ENCODE measurements at regions of chr11 and their contacts with region 1.

Region 1: GRCh38 chr11:61509043-61510029 is 787 bp downstream of the LRRC10B start:
- DNase-seq: peak; percentile 79 to 80
- H3K4me3 ChIP-seq: peak overlapping the region in 1 of 3 donors; percentile 19
- H3K27ac ChIP-seq: no peak overlapping the region
- H3K4me1 ChIP-seq: peaks cover 13 to 20% of the 10 kb centered on the region in 2 donors
- H3K27me3 ChIP-seq: peaks cover 13% of the 10 kb centered on the region
- CTCF ChIP-seq: peak; percentile 29 to 83 (median 74)
- POLR2A ChIP-seq: no peak

Region 2: DNA sequence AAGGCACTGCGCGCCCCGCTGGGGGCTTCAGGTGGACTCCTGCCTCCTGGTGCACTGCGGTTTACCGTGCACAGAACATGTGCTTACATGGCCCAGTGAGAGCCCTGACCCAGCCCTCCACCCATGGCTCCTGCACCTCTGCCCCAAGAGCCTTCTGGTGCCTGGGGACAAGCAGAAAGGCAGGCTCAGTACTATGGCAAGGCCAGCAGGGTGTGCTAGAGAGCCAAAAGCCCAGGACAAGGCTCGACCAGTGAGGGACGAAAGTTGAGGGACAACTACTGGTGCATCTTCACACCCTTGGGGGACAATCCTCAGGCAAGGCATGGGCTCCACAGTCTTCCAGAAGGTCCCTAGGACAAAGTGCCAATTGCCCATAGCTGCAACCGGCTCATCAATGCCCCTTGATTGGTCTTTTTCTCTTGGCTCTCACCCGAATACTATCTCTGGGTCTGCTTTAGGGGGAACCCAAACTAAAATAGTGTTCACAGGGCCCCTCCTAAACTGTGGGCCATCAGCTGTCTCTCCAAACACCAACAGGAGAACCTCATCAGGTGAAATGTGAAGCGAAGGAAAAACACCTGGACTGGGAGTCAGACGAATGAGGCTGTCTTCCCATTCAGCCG is 254.8 kb before region 1 on chr11:
- intact Hi-C with region 1: no loop called
- DNase-seq: peak; percentile 56 to 61
- H3K4me3 ChIP-seq: no peak overlapping the region
- H3K27ac ChIP-seq: no peak overlapping the region
- H3K4me1 ChIP-seq: peaks cover 16 to 30% of the 10 kb centered on the region in 2 donors
- H3K27me3 ChIP-seq: no peaks in the 10 kb centered on the region
- CTCF ChIP-seq: peak in 5 of 6 experiments; percentile 68 to 89 (median 79)
- POLR2A ChIP-seq: no peak

Region 3: DNA sequence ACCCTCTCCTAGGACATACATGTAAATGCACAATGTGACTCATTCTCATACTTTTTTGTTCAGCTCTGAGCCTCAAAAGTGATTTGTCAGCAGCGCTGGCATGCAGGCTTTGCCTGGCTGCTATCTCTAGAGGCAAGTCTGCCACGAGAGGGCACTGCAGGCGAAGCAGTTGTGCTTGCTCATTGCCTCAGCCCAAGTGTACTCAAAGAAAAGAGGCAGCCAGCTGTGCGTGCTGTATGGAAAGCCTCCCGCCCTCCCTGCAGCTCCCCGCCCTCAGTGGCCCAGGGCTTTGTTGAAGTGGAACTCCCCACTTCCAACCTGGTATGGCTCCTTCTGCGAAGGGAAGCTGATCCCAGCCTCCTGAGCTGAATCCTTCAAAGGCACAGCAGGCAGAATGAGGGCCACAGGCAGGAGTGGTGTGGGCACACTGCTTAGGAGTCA is 63.1 kb before region 1 on chr11:
- intact Hi-C with region 1: loop called (anchors 10 kb)
- DNase-seq: peak; percentile 98 to 99
- H3K4me3 ChIP-seq: no peak overlapping the region
- H3K27ac ChIP-seq: peak overlapping the region; percentile 44 to 74 (median 63)
- H3K4me1 ChIP-seq: peaks cover 13% of the 10 kb centered on the region in 2 donors
- H3K27me3 ChIP-seq: no peaks in the 10 kb centered on the region
- CTCF ChIP-seq: peak; percentile 64 to 95 (median 88)
- POLR2A ChIP-seq: no peak

Region 4: DNA sequence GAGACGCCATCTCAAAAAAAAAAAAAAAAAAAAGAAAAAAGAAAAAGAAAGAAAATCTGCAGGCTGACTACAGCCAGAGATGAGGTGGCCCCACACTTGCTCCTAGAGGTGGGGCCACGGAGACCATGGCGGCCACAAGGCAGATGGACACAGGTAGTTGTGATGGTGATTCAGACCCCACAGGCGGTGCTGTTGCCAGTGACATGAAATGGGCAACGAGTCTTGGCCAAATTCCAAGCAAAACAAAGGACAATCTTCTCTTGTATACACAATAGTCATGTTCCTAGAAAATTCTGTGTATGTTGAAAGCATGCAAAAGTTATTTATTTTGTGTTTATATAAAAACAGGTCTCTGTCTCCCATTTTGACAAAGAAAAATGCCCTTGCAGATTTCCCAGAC is 148.2 kb after region 1 on chr11:
- intact Hi-C with region 1: no loop called
- DNase-seq: no peak
- H3K4me3 ChIP-seq: no peak overlapping the region
- H3K27ac ChIP-seq: no peak overlapping the region
- H3K4me1 ChIP-seq: no peaks in the 10 kb centered on the region
- H3K27me3 ChIP-seq: no peaks in the 10 kb centered on the region
- CTCF ChIP-seq: no peak
- POLR2A ChIP-seq: no peak